GM10248 (cell line): ENCODE measurements at regions of chr4 and their contacts with region 1.

Region 1: GRCh38 chr4:76585897-76586360 is 150.9 kb downstream of the SHROOM3 start:
- DNase-seq: peak; percentile 72
- CTCF ChIP-seq: peak; percentile 6

Region 2: GRCh38 chr4:76388160-76388908 is 197.6 kb before region 1 on chr4:
- CTCF ChIA-PET with region 1: no interaction called
- POLR2A ChIA-PET with region 1: no interaction called
- DNase-seq: no peak
- CTCF ChIP-seq: no peak

Region 3: GRCh38 chr4:76607266-76607799 is 21.4 kb after region 1 on chr4:
- CTCF ChIA-PET with region 1: interaction called, 11 read pairs
- POLR2A ChIA-PET with region 1: no interaction called
- DNase-seq: peak; percentile 50
- CTCF ChIP-seq: no peak